Activated CD4-positive, alpha-beta memory T cell treated with anti-CD3 and anti-CD28 coated beads, Interleukin-2, amount 10 ng/mL, durations not matched to agents 7 days and 5 days (primary cell): ENCODE measurements at regions of chr14 and their contacts with region 1.

Region 1: GRCh38 chr14:22822571-22823098 is 7.1 kb upstream of the MRPL52 start:
- DNase-seq: peak; percentile 71
- H3K4me3 Mint-ChIP-seq: peak overlapping the region; percentile 39
- H3K27ac Mint-ChIP-seq: no peak overlapping the region
- H3K4me1 Mint-ChIP-seq: peaks cover 36% of the 10 kb centered on the region
- H3K27me3 Mint-ChIP-seq: peaks cover 19% of the 10 kb centered on the region

Region 2: DNA sequence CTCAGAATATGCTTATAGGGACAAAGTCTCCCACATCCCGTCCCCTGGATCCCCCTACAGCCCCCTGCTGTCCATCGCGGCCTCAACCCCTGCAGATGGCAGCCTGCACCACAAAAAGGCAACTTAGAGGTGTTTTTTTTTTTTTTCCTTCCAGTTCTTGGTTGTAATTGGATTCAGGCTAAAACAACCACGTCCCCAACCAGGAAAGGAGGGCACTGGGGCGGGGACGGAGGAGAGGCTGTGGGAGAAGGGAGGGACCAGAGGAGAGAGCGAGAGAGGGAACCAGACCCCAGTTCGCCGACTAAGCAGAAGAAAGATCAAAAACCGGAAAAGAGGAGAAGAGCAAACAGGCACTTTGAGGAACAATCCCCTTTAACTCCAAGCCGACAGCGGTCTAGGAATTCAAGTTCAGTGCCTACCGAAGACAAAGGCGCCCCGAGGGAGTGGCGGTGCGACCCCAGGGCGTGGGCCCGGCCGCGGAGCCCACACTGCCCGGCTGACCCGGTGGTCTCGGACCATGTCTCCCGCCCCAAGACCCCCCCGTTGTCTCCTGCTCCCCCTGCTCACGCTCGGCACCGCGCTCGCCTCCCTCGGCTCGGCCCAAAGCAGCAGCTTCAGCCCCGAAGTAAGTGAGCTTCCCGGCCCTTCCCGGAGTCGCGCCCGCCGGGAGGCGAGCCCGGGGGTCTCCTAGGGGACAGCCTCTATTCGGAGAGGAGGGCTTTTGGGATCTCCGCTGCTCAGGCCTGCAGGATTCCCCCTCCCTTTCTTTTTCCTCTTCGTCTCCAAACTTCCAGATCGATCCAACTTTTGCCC is 13.9 kb after region 1 on chr14 and contains the start of gene MMP14:
- CTCF ChIA-PET with region 1: interaction called, 18 read pairs
- POLR2A ChIA-PET with region 1: no interaction called
- DNase-seq: no peak
- H3K4me3 Mint-ChIP-seq: no peak within 1 kb of the TSS
- H3K27ac Mint-ChIP-seq: no peak within 1 kb of the TSS
- H3K4me1 Mint-ChIP-seq: peaks cover 11% of the 10 kb centered on the region
- H3K27me3 Mint-ChIP-seq: peaks cover 15% of the 10 kb centered on the region
- total RNA-seq, gene MMP14: 1.9 to 2.9 TPM

Region 3: DNA sequence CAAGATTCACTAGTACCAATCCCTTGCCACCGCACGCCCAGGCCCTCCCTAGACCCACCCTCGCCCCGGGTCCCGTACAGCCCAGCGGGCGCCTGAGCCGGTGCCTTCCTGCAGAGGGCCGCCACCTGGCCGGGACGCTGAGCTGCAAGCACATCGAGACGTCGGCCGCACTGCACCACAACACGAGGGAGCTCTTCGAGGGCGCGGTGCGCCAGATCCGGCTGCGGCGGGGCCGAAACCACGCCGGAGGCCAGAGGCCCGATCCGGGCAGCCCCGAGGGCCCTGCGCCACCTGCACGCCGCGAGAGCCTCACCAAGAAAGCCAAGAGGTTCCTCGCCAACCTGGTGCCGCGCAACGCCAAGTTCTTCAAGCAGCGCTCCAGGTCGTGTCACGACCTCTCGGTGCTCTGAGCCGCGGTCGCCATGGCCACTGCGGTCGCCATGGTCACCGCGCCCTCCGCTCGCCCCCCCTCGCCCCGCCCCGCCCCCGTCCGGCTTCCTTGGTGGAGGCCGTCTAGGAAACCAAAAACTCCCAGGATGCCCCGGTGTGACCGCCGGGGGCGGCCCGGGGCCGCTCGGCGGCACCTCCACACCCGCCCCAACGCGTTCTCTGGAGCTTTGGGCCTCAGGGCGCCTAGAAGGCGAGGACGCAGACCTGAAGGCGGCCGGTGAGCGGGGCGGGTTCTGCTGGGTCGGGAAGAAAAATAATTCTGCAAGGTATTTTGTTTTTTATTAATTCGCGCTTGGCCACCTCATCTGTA is 64.0 kb after region 1 on chr14:
- CTCF ChIA-PET with region 1: interaction called, 20 read pairs
- POLR2A ChIA-PET with region 1: interaction called, 4 read pairs
- DNase-seq: peak; percentile 85
- H3K4me3 Mint-ChIP-seq: peak overlapping the region; percentile 84
- H3K27ac Mint-ChIP-seq: peak overlapping the region; percentile 89
- H3K4me1 Mint-ChIP-seq: peaks cover 44% of the 10 kb centered on the region
- H3K27me3 Mint-ChIP-seq: peaks cover 23% of the 10 kb centered on the region

Region 4: DNA sequence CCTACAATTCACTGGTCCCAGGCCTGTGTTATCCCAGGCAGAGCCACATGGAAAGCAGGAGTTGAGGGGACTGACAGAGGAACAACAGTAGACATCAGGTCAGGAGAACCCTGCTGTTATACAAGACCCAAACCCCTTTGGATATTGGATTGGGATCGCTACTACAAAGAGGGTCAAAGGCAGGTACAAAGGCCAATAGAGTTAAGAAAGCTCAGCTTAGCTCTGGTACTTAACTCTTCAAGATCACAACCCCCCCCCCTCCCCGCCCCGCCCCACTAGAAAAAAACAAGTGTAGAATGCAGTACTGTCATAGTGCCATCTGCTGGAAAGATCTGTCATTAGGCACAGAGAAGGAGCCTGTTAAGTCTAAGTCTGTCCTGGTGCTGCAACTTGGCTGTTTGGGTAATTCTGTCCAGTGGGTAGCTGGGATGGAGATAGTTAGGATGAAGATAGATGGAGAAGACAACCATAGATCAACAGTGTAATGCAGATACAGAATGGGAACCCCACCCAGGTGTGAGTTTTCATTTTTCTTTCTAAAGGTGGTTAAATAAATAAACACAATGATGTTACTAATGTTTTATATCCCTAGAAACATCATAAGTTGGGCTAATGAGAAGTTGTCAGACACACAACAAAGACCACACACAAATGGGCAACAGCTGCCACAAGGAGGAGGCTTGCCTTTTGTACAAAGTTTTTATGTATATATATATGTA is 77.6 kb after region 1 on chr14:
- CTCF ChIA-PET with region 1: interaction called, 55 read pairs
- POLR2A ChIA-PET with region 1: interaction called, 5 read pairs
- DNase-seq: peak; percentile 48
- H3K4me3 Mint-ChIP-seq: no peak overlapping the region
- H3K27ac Mint-ChIP-seq: peak overlapping the region; percentile 44
- H3K4me1 Mint-ChIP-seq: peaks cover 19% of the 10 kb centered on the region
- H3K27me3 Mint-ChIP-seq: no peaks in the 10 kb centered on the region